GM12878 (cell line): ENCODE measurements at regions of chr15 and their contacts with region 1.

Region 1: DNA sequence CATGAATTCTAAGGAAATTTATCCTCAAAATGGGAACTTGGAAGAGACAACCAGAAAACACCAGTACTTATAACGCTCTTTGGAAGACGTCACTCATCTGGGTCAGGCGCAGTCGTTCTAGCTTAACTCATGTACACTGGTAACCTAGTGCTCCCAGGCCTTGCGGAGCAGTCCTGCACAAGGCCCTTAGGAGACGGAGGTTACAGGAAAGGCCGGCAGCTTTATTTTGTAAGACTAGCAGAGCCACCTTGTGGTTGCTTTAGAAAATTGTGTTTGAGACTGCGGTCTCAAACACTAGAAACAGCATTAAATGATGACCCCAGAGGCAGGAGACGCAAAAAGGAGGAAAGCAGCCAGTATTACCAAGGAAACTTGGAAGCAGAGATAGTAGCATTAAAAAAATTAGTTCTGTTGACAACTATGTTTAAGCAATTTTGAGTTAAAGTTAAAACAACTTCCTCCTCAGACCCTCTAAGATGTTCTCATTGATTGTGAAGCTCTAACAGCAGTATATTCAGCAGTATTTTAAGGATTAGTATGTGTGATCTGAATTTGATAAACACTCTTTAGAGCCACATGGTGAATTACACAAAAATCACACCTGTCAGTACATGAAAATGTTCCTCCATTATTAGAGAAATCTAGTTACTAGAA is 141.9 kb upstream of the C2CD4B start:
- DNase-seq: no peak
- ATAC-seq: peak; percentile 86
- H3K4me3 ChIP-seq: no peak overlapping the region
- H3K27ac ChIP-seq: no peak overlapping the region
- H3K4me1 ChIP-seq: no peaks in the 10 kb centered on the region
- H3K27me3 ChIP-seq: no peaks in the 10 kb centered on the region
- CTCF ChIP-seq: peak; percentile 45 to 62 (median 52); a peak in 4 of 6 replicates
- EP300 ChIP-seq: no peak
- POLR2A ChIP-seq: no peak
- RAD21 ChIP-seq: peak; percentile 50

Region 2: DNA sequence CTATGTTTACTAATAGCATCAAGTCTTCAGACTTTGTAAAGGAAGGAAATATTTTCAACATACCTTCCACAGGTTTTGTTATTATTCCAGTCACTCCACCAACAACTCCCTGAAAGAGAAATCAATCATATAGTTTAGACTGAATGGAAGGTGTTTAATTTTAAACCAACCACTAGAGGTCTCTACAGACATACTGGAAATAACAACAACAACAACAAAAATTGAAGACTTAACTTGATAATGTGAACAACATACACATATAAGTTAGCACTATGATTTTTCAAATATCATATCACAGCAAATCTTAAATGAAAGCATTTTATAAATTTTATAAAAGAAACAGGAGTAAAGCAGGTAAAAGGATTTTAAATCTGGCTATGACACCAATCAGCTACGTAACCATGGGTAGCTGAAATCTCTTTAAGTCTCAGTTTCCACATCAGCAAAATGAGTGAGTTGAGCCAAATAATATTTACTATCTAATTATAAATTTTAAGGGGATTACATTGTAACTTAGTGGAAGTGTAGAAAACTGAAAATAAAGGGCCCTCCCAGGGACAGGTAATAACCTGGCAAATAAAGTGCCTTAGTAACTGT is 435.0 kb before region 1 on chr15:
- CTCF ChIA-PET with region 1: interaction called, 11 read pairs
- POLR2A ChIA-PET with region 1: no interaction called
- RAD21 ChIA-PET with region 1: interaction called, 3 read pairs
- SMC1A ChIA-PET with region 1: interaction called, 6 read pairs
- in situ Hi-C with region 1: loop called (anchors 10 kb)
- intact Hi-C with region 1: loop called (anchors 5 kb)
- DNase-seq: no peak
- ATAC-seq: peak; percentile 61
- H3K4me3 ChIP-seq: no peak overlapping the region
- H3K27ac ChIP-seq: no peak overlapping the region
- H3K4me1 ChIP-seq: no peaks in the 10 kb centered on the region
- H3K27me3 ChIP-seq: no peaks in the 10 kb centered on the region
- CTCF ChIP-seq: peak; percentile 23 to 54 (median 43); a peak in 3 of 6 replicates
- EP300 ChIP-seq: no peak
- POLR2A ChIP-seq: no peak
- RAD21 ChIP-seq: peak; percentile 43; the same call in 1 of the 2 replicates

Region 3: GRCh38 chr15:62125773-62126172 is 181.2 kb before region 1 on chr15:
- CTCF ChIA-PET with region 1: interaction called, 20 read pairs
- POLR2A ChIA-PET with region 1: no interaction called
- RAD21 ChIA-PET with region 1: interaction called, 3 read pairs
- SMC1A ChIA-PET with region 1: interaction called, 3 read pairs
- in situ Hi-C with region 1: no loop called
- intact Hi-C with region 1: no loop called
- DNase-seq: no peak
- ATAC-seq: no peak
- H3K4me3 ChIP-seq: no peak overlapping the region
- H3K27ac ChIP-seq: no peak overlapping the region
- H3K4me1 ChIP-seq: no peaks in the 10 kb centered on the region
- H3K27me3 ChIP-seq: no peaks in the 10 kb centered on the region
- CTCF ChIP-seq: 0 out of 6 replicates have a peak, but pooled peaks of 1 of the 3 experiments have one; percentile 8
- EP300 ChIP-seq: no peak
- POLR2A ChIP-seq: no peak
- RAD21 ChIP-seq: no peak

Region 4: GRCh38 chr15:62228604-62229003 is 78.4 kb before region 1 on chr15:
- CTCF ChIA-PET with region 1: no interaction called
- POLR2A ChIA-PET with region 1: no interaction called
- RAD21 ChIA-PET with region 1: no interaction called
- SMC1A ChIA-PET with region 1: no interaction called
- in situ Hi-C with region 1: no loop called
- intact Hi-C with region 1: no loop called
- DNase-seq: no peak
- ATAC-seq: no peak
- H3K4me3 ChIP-seq: no peak overlapping the region
- H3K27ac ChIP-seq: no peak overlapping the region
- H3K4me1 ChIP-seq: no peaks in the 10 kb centered on the region
- H3K27me3 ChIP-seq: no peaks in the 10 kb centered on the region
- CTCF ChIP-seq: no peak
- EP300 ChIP-seq: no peak
- POLR2A ChIP-seq: no peak
- RAD21 ChIP-seq: no peak

Region 5: GRCh38 chr15:62277816-62278394 is 29.1 kb before region 1 on chr15:
- CTCF ChIA-PET with region 1: interaction called, 13 read pairs
- POLR2A ChIA-PET with region 1: no interaction called
- RAD21 ChIA-PET with region 1: interaction called, 7 read pairs
- SMC1A ChIA-PET with region 1: interaction called, 6 read pairs
- in situ Hi-C with region 1: no loop called
- intact Hi-C with region 1: no loop called
- DNase-seq: no peak
- ATAC-seq: peak; percentile 74
- H3K4me3 ChIP-seq: no peak overlapping the region
- H3K27ac ChIP-seq: no peak overlapping the region
- H3K4me1 ChIP-seq: no peaks in the 10 kb centered on the region
- H3K27me3 ChIP-seq: no peaks in the 10 kb centered on the region
- CTCF ChIP-seq: peak in 1 of 3 experiments; percentile 9; a peak in 1 of 6 replicates
- EP300 ChIP-seq: no peak
- POLR2A ChIP-seq: no peak
- RAD21 ChIP-seq: no peak

Region 6: GRCh38 chr15:62403164-62403809 is 96.3 kb after region 1 on chr15:
- CTCF ChIA-PET with region 1: no interaction called
- POLR2A ChIA-PET with region 1: no interaction called
- RAD21 ChIA-PET with region 1: no interaction called
- SMC1A ChIA-PET with region 1: no interaction called
- in situ Hi-C with region 1: no loop called
- intact Hi-C with region 1: no loop called
- DNase-seq: no peak
- ATAC-seq: no peak
- H3K4me3 ChIP-seq: no peak overlapping the region
- H3K27ac ChIP-seq: no peak overlapping the region
- H3K4me1 ChIP-seq: no peaks in the 10 kb centered on the region
- H3K27me3 ChIP-seq: no peaks in the 10 kb centered on the region; a peak in 2 of 4 replicates
- CTCF ChIP-seq: no peak
- EP300 ChIP-seq: no peak
- POLR2A ChIP-seq: no peak
- RAD21 ChIP-seq: no peak